Activated T-helper 2 cell treated with anti-CD3 and anti-CD28 coated beads, Interferon-gamma antibody, Interleukin-2, Interleukin-4, amounts not matched to agents 10 μg/mL and 5 μg/mL and 100 μg/mL, durations not matched to agents 14 hours and 24 hours and 36 hours (primary cell): ENCODE measurements at regions of chr3 and their contacts with region 1.

Region 1: GRCh38 chr3:141487521-141488252 is 860 bp downstream of the RASA2 start:
- DNase-seq: peak; percentile 86
- H3K4me3 Mint-ChIP-seq: peak overlapping the region; percentile 91
- H3K27ac Mint-ChIP-seq: peak overlapping the region; percentile 95
- H3K4me1 Mint-ChIP-seq: peaks cover 56% of the 10 kb centered on the region
- H3K27me3 Mint-ChIP-seq: no peaks in the 10 kb centered on the region

Region 2: DNA sequence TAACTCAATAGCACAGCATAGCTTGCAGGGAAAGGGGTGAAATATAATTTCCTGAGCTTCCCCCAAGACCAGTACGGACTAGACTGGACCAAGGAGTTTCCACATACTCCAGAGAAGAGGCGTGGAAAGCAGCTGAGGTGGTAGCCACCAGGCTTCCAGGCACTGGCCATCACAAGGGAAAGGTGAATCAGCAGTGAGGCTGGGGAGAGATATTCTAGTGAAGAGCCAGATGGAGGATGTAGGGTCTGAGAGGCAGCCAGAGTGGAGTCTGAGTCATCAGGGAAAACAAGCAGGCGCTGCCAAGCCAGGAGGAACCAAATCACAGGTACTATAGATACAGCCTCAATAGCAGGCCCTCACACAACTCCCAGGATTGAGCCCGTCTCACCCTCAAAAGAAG is 10.5 kb before region 1 on chr3:
- intact Hi-C with region 1: loop called (anchors 1 kb)
- DNase-seq: no peak
- H3K4me3 Mint-ChIP-seq: no peak overlapping the region
- H3K27ac Mint-ChIP-seq: no peak overlapping the region
- H3K4me1 Mint-ChIP-seq: peaks cover 23% of the 10 kb centered on the region
- H3K27me3 Mint-ChIP-seq: peaks cover 10% of the 10 kb centered on the region

Region 3: GRCh38 chr3:141669434-141669833 is 181.7 kb after region 1 on chr3:
- intact Hi-C with region 1: no loop called
- DNase-seq: no peak
- H3K4me3 Mint-ChIP-seq: no peak overlapping the region
- H3K27ac Mint-ChIP-seq: no peak overlapping the region
- H3K4me1 Mint-ChIP-seq: no peaks in the 10 kb centered on the region
- H3K27me3 Mint-ChIP-seq: peaks cover 17% of the 10 kb centered on the region